ENCODE measurements at regions of chr15 and their contacts with region 1.

Region 1: GRCh38 chr15:76973362-76973743 is 21.6 kb upstream of the PSTPIP1 start:
- DNase-seq: peak; percentile 40 to 83 (median 58)
- H3K4me3 ChIP-seq: no peak overlapping the region
- H3K4me3 Mint-ChIP-seq: no peak overlapping the region
- H3K27ac ChIP-seq: no peak overlapping the region
- H3K27ac Mint-ChIP-seq: peak overlapping the region in 3 of 8 donors; percentile 10 to 61 (median 37)
- H3K4me1 ChIP-seq: peaks cover 4% of the 10 kb centered on the region
- H3K4me1 Mint-ChIP-seq: peaks cover 11 to 22% (median 16%) of the 10 kb centered on the region in 3 donors
- H3K27me3 ChIP-seq: no peaks in the 10 kb centered on the region
- H3K27me3 Mint-ChIP-seq: peaks cover 0 to 3% of the 10 kb centered on the region in 2 donors

Region 2: DNA sequence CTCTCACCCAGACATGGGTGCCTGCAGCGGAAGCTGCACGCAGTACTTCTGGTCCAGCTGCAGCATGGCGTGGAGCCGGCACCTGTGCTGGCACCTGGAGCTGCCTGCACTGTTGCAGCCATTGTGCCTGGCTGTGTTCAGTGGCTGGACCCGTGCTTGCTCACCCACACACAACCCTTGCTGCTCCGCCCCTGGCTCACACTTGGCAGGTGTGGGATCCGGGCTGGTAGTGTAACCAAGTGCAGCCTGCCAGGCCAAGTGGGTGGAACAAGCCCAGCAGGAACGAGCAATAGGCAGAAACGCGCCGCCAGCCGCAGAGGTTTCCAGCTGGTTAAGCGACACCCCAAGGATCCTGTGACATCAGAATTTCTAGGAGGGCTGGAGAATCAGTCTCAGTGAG is 57.0 kb before region 1 on chr15:
- CTCF ChIA-PET with region 1: no interaction called
- POLR2A ChIA-PET with region 1: no interaction called
- DNase-seq: no peak
- H3K4me3 ChIP-seq: no peak overlapping the region
- H3K4me3 Mint-ChIP-seq: no peak overlapping the region
- H3K27ac ChIP-seq: no peak overlapping the region
- H3K27ac Mint-ChIP-seq: no peak overlapping the region
- H3K4me1 ChIP-seq: no peaks in the 10 kb centered on the region
- H3K4me1 Mint-ChIP-seq: no peaks in the 10 kb centered on the region
- H3K27me3 ChIP-seq: no peaks in the 10 kb centered on the region
- H3K27me3 Mint-ChIP-seq: peaks cover 3 to 25% of the 10 kb centered on the region in 2 donors

Region 3: GRCh38 chr15:76994971-76995945 is 21.9 kb after region 1 on chr15 and contains the start of gene PSTPIP1:
- CTCF ChIA-PET with region 1: interaction called, 13 read pairs
- POLR2A ChIA-PET with region 1: no interaction called
- DNase-seq: peak; percentile 48 to 83 (median 70)
- H3K4me3 ChIP-seq: peak within 1 kb of the TSS; percentile 92
- H3K4me3 Mint-ChIP-seq: peak within 1 kb of the TSS; percentile 81 to 99 (median 97)
- H3K27ac ChIP-seq: peak within 1 kb of the TSS; percentile 57
- H3K27ac Mint-ChIP-seq: peak within 1 kb of the TSS; percentile 86 to 100 (median 97)
- H3K4me1 ChIP-seq: peaks cover 62% of the 10 kb centered on the region
- H3K4me1 Mint-ChIP-seq: peaks cover 58 to 74% (median 64%) of the 10 kb centered on the region in 3 donors
- H3K27me3 ChIP-seq: no peaks in the 10 kb centered on the region
- H3K27me3 Mint-ChIP-seq: no peaks in the 10 kb centered on the region
- total RNA-seq, gene PSTPIP1: 123 to 127 TPM

Region 4: GRCh38 chr15:77013776-77014131 is 40.4 kb after region 1 on chr15:
- CTCF ChIA-PET with region 1: interaction called, 26 read pairs
- POLR2A ChIA-PET with region 1: no interaction called
- DNase-seq: peak; percentile 51 to 97 (median 86)
- H3K4me3 ChIP-seq: peak overlapping the region; percentile 47
- H3K4me3 Mint-ChIP-seq: peak overlapping the region; percentile 66 to 90 (median 89)
- H3K27ac ChIP-seq: peak overlapping the region; percentile 64
- H3K27ac Mint-ChIP-seq: peak overlapping the region; percentile 82 to 100 (median 96)
- H3K4me1 ChIP-seq: peaks cover 97% of the 10 kb centered on the region
- H3K4me1 Mint-ChIP-seq: peaks cover 92 to 100% (median 99%) of the 10 kb centered on the region in 3 donors
- H3K27me3 ChIP-seq: no peaks in the 10 kb centered on the region
- H3K27me3 Mint-ChIP-seq: no peaks in the 10 kb centered on the region

Region 5: GRCh38 chr15:77031376-77032050 is 58.2 kb after region 1 on chr15:
- CTCF ChIA-PET with region 1: interaction called, 78 read pairs
- POLR2A ChIA-PET with region 1: no interaction called
- DNase-seq: peak in 4 of 5 donors; percentile 0 to 52 (median 24)
- H3K4me3 ChIP-seq: no peak overlapping the region
- H3K4me3 Mint-ChIP-seq: no peak overlapping the region
- H3K27ac ChIP-seq: no peak overlapping the region
- H3K27ac Mint-ChIP-seq: peak overlapping the region in 5 of 8 donors; percentile 46 to 83 (median 70)
- H3K4me1 ChIP-seq: no peaks in the 10 kb centered on the region
- H3K4me1 Mint-ChIP-seq: peaks cover 0 to 19% (median 9%) of the 10 kb centered on the region in 3 donors
- H3K27me3 ChIP-seq: no peaks in the 10 kb centered on the region
- H3K27me3 Mint-ChIP-seq: no peaks in the 10 kb centered on the region

Region 6: DNA sequence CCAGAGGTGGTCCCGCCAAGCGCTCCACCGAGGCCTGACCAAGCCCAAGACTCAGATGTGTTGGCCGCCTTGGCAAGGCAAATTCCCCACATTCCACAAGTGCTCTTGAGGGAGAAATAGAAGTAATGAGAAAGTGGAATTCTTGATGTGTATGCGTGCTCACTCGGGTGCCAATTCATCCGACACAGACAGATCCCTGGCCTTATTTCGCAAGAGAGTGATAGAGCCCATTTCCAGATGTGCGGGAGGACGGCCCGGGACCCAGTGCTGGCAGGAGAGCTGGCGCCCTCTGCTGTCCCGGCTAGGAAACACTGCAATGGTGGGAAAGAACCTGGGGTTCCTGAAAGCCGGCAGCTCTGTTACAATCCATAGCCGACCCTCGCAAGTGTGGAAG is 523.4 kb after region 1 on chr15:
- CTCF ChIA-PET with region 1: interaction called, 17 read pairs
- POLR2A ChIA-PET with region 1: no interaction called
- DNase-seq: peak; percentile 52 to 76 (median 55)
- H3K4me3 ChIP-seq: no peak overlapping the region
- H3K4me3 Mint-ChIP-seq: no peak overlapping the region
- H3K27ac ChIP-seq: no peak overlapping the region
- H3K27ac Mint-ChIP-seq: no peak overlapping the region
- H3K4me1 ChIP-seq: peaks cover 16% of the 10 kb centered on the region
- H3K4me1 Mint-ChIP-seq: peaks cover 14 to 25% (median 20%) of the 10 kb centered on the region in 3 donors
- H3K27me3 ChIP-seq: no peaks in the 10 kb centered on the region
- H3K27me3 Mint-ChIP-seq: no peaks in the 10 kb centered on the region